ENCODE measurements at regions of chr13 and their contacts with region 1.

Region 1: GRCh38 chr13:30142486-30143211 is 164.7 kb downstream of the KATNAL1 start:
- DNase-seq: peak; percentile 63
- H3K4me3 Mint-ChIP-seq: no peak overlapping the region
- H3K27ac Mint-ChIP-seq: peak overlapping the region; percentile 37
- H3K4me1 Mint-ChIP-seq: peaks cover 55% of the 10 kb centered on the region
- H3K27me3 Mint-ChIP-seq: no peaks in the 10 kb centered on the region

Region 2: DNA sequence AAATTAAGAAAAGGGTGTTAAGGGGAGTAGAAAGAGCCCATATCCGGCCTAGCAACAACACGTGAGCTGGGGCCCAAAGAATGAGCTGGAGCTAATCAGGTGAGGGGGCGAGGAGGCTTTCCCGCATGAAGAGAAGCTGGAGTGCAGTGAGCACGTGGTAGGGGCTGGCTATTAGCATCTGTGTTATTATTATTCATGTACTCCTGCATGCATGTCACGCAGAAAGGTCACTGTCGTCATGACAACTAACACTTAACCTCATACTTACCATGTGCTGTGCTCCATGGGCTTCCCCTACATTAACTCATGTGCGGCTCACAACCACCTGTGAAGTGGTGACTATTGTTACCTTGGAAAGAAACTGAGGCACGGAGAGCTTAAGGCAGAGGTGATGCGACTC is 64.6 kb before region 1 on chr13:
- CTCF ChIA-PET with region 1: no interaction called
- intact Hi-C with region 1: no loop called
- DNase-seq: no peak
- H3K4me3 Mint-ChIP-seq: no peak overlapping the region
- H3K27ac Mint-ChIP-seq: no peak overlapping the region
- H3K4me1 Mint-ChIP-seq: no peaks in the 10 kb centered on the region
- H3K27me3 Mint-ChIP-seq: no peaks in the 10 kb centered on the region

Region 3: DNA sequence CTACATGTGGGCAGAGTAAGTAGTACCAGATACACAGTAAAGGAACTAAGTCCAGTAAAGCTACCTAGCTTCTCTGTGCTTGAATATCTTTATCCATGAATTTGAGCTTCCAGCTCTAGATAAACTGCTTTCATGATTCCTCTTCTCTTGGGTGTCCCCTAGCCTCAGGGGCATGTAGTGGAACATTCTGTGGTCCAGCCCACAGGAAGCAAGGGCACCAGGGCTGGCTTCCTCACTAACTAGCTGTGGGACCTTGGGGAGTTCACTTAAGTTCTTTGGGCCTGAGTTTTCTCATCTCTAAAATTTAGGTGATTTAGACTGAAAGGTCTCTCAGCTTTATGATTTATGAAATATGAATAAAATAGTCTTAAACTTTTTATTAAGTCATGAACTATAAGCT is 21.0 kb before region 1 on chr13:
- CTCF ChIA-PET with region 1: interaction called, 11 read pairs
- intact Hi-C with region 1: loop called (anchors 2 kb)
- DNase-seq: no peak
- H3K4me3 Mint-ChIP-seq: no peak overlapping the region
- H3K27ac Mint-ChIP-seq: no peak overlapping the region
- H3K4me1 Mint-ChIP-seq: peaks cover 32% of the 10 kb centered on the region
- H3K27me3 Mint-ChIP-seq: no peaks in the 10 kb centered on the region

Region 4: DNA sequence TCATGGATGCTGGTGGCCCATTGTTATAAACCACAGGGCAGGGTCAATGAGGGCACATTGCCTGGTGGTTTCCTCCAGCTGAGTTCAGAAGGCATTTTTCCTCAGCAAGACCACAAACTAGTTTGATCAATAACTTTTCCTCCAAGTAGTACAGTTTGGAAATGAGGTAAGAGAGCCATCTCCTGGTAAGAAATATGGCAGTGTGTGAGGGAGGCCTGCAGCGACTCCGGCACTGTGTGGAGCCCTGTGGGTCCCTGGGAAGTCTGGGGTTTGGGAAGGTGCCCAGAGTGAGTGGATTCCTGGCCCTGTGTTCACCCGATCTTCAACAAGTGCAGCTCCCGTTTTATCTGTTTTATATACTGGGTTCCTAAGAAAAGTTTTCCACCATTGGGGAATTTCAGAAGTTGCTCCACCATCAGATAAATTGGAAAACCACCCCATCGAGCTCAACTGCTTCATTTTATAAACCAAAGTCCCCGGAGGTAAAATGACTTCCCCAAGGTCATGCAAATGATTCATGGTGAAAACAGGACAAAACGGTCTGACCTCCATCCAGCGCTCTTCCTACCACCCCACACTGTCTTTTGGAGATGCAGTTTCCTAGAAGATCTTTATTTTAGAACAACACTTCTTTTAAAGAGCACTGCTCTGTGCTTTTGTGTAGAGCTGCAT is 16.3 kb after region 1 on chr13:
- CTCF ChIA-PET with region 1: interaction called, 96 read pairs
- intact Hi-C with region 1: loop called (anchors 1 kb)
- DNase-seq: no peak
- H3K4me3 Mint-ChIP-seq: no peak overlapping the region
- H3K27ac Mint-ChIP-seq: no peak overlapping the region
- H3K4me1 Mint-ChIP-seq: peaks cover 25% of the 10 kb centered on the region
- H3K27me3 Mint-ChIP-seq: no peaks in the 10 kb centered on the region

Region 5: GRCh38 chr13:30224732-30225131 is 82.1 kb after region 1 on chr13:
- CTCF ChIA-PET with region 1: interaction called, 3 read pairs
- intact Hi-C with region 1: loop called (anchors 1 kb)
- DNase-seq: peak; percentile 14
- H3K4me3 Mint-ChIP-seq: no peak overlapping the region
- H3K27ac Mint-ChIP-seq: no peak overlapping the region
- H3K4me1 Mint-ChIP-seq: peaks cover 16% of the 10 kb centered on the region
- H3K27me3 Mint-ChIP-seq: no peaks in the 10 kb centered on the region

Region 6: DNA sequence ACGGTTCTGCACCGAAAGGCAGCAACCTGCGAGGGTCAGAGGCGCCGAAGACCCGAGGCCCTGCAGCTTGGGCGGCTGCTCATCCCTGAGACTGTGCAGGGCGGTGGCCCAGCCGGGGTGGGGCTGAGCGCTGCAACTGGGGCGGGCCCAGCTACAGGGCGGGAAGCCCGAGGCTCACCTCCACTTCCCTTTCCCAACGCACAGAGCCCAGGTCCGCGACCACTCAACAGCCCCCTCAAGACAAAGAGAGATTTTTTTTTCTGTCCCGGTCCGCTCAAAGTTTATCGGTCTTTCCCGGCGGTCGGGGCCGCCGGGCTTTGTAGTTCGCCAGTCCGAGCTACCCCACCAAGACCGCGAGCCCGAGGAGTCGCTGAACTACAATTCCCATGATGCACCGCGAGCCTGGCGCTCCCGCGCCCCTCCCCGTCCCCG is 164.1 kb after region 1 on chr13:
- CTCF ChIA-PET with region 1: no interaction called
- intact Hi-C with region 1: loop called (anchors 1 kb)
- DNase-seq: peak; percentile 94
- H3K4me3 Mint-ChIP-seq: peak overlapping the region; percentile 83
- H3K27ac Mint-ChIP-seq: peak overlapping the region; percentile 76
- H3K4me1 Mint-ChIP-seq: peaks cover 14% of the 10 kb centered on the region
- H3K27me3 Mint-ChIP-seq: no peaks in the 10 kb centered on the region

Region 7: GRCh38 chr13:30371649-30372265 is 229.1 kb after region 1 on chr13:
- CTCF ChIA-PET with region 1: interaction called, 4 read pairs
- intact Hi-C with region 1: loop called (anchors 1 kb)
- DNase-seq: peak; percentile 87
- H3K4me3 Mint-ChIP-seq: peak overlapping the region; percentile 58
- H3K27ac Mint-ChIP-seq: peak overlapping the region; percentile 87
- H3K4me1 Mint-ChIP-seq: peaks cover 75% of the 10 kb centered on the region
- H3K27me3 Mint-ChIP-seq: no peaks in the 10 kb centered on the region

Region 8: GRCh38 chr13:30429721-30430694 is 287.4 kb after region 1 on chr13:
- CTCF ChIA-PET with region 1: no interaction called
- intact Hi-C with region 1: loop called (anchors 1 kb)
- DNase-seq: peak; percentile 53
- H3K4me3 Mint-ChIP-seq: peak overlapping the region; percentile 47
- H3K27ac Mint-ChIP-seq: peak overlapping the region; percentile 82
- H3K4me1 Mint-ChIP-seq: peaks cover 29% of the 10 kb centered on the region
- H3K27me3 Mint-ChIP-seq: no peaks in the 10 kb centered on the region

Measured in activated naive CD4-positive, alpha-beta T cell treated with anti-CD3 and anti-CD28 coated beads for 36 hours (primary cell).